Activated naive CD4-positive, alpha-beta T cell treated with anti-CD3 and anti-CD28 coated beads for 36 hours (primary cell): ENCODE measurements at regions of chr10 and their contacts with region 1.

Region 1: GRCh38 chr10:110530131-110530831 is 32.6 kb downstream of the DUSP5 start:
- DNase-seq: peak; percentile 52
- H3K4me3 Mint-ChIP-seq: no peak overlapping the region
- H3K27ac Mint-ChIP-seq: no peak overlapping the region
- H3K4me1 Mint-ChIP-seq: peaks cover 52% of the 10 kb centered on the region
- H3K27me3 Mint-ChIP-seq: no peaks in the 10 kb centered on the region

Region 2: DNA sequence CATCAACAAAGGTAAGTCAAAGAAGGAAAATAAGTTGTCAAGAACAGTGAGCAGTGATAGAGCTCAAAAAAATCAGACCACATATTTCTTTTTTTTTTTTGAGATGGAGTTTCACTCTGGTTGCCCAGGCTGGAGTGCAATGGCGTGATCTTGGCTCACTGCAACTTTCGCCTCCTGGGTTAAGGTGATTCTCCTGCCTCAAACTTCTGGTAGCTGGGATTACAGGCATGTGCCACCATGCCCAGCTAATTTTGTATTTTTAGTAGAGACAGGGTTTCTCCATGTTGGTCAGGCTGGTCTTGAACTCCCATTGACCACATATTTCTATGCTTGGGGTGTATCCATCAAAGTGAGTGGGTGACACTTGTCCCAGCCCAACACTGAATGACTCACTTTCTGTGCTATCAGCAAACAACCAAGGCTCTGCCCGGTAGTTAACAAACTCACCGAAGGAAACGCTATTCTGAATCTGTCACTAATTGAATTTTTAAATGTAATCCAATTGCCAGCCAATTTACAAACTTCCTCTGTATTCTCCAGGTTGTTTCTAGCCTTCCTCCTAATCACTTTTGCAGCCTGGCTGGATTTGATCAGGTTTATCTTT is 206.0 kb before region 1 on chr10:
- CTCF ChIA-PET with region 1: no interaction called
- intact Hi-C with region 1: loop called (anchors 1 kb)
- DNase-seq: no peak
- H3K4me3 Mint-ChIP-seq: no peak overlapping the region
- H3K27ac Mint-ChIP-seq: peak overlapping the region; percentile 84
- H3K4me1 Mint-ChIP-seq: peaks cover 37% of the 10 kb centered on the region
- H3K27me3 Mint-ChIP-seq: peaks cover 2% of the 10 kb centered on the region

Region 3: GRCh38 chr10:110502851-110503301 is 27.4 kb before region 1 on chr10:
- CTCF ChIA-PET with region 1: interaction called, 4 read pairs
- intact Hi-C with region 1: loop called (anchors 1 kb)
- DNase-seq: peak; percentile 66
- H3K4me3 Mint-ChIP-seq: peak overlapping the region; percentile 97
- H3K27ac Mint-ChIP-seq: peak overlapping the region; percentile 85
- H3K4me1 Mint-ChIP-seq: peaks cover 74% of the 10 kb centered on the region
- H3K27me3 Mint-ChIP-seq: no peaks in the 10 kb centered on the region

Region 4: DNA sequence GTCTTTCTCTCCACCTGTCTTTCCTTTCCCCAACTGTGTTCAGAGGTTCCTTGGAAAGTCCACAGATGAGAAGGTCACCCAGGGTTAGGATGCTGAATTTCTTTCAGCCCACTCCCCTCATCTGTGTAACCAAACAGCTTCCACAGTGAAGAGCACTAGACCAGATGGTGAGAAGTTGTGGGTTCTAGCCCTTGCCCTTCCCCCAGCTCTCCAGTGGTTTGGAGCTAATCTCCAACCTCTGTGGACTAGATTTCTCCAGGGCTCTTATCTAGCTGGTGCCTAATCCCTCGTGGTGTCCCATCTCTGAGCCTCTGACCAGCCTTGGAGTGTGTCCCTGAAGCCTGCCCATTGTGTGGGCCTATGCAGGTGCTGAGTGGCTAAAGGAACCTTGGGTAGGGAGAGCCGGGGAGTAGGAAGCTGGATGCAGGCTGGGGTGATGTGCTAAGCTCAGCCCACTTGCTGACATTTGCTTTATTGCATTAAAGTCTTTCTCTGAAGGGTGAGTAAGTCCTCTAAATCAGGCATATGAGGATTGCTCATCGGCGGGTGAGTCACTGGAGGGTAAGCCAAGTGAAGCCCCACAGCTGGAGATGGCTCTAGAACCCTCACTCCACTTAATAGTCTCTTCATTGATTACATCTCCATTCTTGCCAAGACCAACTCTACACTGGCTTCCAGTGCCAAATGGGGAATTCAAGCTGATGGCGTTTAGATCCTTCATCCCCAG is 17.7 kb before region 1 on chr10:
- CTCF ChIA-PET with region 1: interaction called, 4 read pairs
- intact Hi-C with region 1: loop called (anchors 1 kb)
- DNase-seq: peak; percentile 86
- H3K4me3 Mint-ChIP-seq: no peak overlapping the region
- H3K27ac Mint-ChIP-seq: peak overlapping the region; percentile 80
- H3K4me1 Mint-ChIP-seq: peaks cover 51% of the 10 kb centered on the region
- H3K27me3 Mint-ChIP-seq: no peaks in the 10 kb centered on the region

Region 5: GRCh38 chr10:110584006-110584405 is 53.7 kb after region 1 on chr10:
- CTCF ChIA-PET with region 1: no interaction called
- intact Hi-C with region 1: no loop called
- DNase-seq: no peak
- H3K4me3 Mint-ChIP-seq: no peak overlapping the region
- H3K27ac Mint-ChIP-seq: peak overlapping the region; percentile 5
- H3K4me1 Mint-ChIP-seq: peaks cover 2% of the 10 kb centered on the region
- H3K27me3 Mint-ChIP-seq: no peaks in the 10 kb centered on the region

Region 6: DNA sequence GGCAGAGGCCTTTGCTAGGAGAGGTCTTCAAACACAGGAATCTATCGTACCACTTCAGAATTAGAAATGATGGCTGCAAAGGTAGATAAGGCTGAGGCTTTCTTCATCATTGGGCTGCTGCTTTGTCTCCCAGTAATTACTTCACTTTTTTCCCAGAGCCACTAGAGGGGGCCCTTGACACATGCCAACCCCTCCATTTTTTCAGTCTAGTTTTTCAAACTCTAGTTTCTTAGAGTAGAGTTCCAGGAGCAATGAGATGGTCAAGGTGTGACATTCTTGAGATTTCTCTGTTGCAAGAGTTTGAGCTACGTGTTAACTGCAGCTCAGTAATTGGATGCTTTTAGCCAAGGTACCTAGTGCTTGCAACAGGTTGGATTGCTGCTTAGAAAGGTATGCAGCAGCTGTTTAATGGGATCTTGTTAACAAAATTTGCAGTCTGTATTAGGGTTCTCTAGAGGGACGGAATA is 80.1 kb after region 1 on chr10:
- CTCF ChIA-PET with region 1: no interaction called
- intact Hi-C with region 1: no loop called
- DNase-seq: peak; percentile 75
- H3K4me3 Mint-ChIP-seq: no peak overlapping the region
- H3K27ac Mint-ChIP-seq: no peak overlapping the region
- H3K4me1 Mint-ChIP-seq: peaks cover 26% of the 10 kb centered on the region
- H3K27me3 Mint-ChIP-seq: no peaks in the 10 kb centered on the region